ENCODE measurements at regions of chr6 and their contacts with region 1.

Region 1: GRCh38 chr6:89432875-89433251 is at the start of gene ANKRD6:
- DNase-seq: peak; percentile 78 to 94 (median 92)
- ATAC-seq: peak; percentile 97 to 98
- H3K4me3 ChIP-seq: peak within 1 kb of the TSS; percentile 81
- H3K27ac ChIP-seq: no peak within 1 kb of the TSS
- H3K4me1 ChIP-seq: no peaks in the 10 kb centered on the region
- H3K27me3 ChIP-seq: no peaks in the 10 kb centered on the region
- total RNA-seq, gene ANKRD6: 17.9 to 22.8 (median 21.0) TPM

Region 2: GRCh38 chr6:89610149-89610642 is 177.3 kb after region 1 on chr6:
- intact Hi-C with region 1: loop called (anchors 2 to 5 kb)
- DNase-seq: peak; percentile 74 to 89 (median 86)
- ATAC-seq: peak; percentile 78 to 79
- H3K4me3 ChIP-seq: no peak overlapping the region
- H3K27ac ChIP-seq: no peak overlapping the region
- H3K4me1 ChIP-seq: no peaks in the 10 kb centered on the region
- H3K27me3 ChIP-seq: no peaks in the 10 kb centered on the region

Measured in right cardiac atrium (tissue), 5 donors.